HCT116 (cell line): ENCODE measurements at regions of chr5 and their contacts with region 1.

Region 1: GRCh38 chr5:6632917-6633468 is at the starts of genes NSUN2 and SRD5A1:
- DNase-seq: peak; percentile 82
- ATAC-seq: peak; percentile 90
- H3K4me3 ChIP-seq: peak within 1 kb of the TSS; percentile 87 to 96
- H3K27ac ChIP-seq: peak within 1 kb of the TSS; percentile 95
- H3K4me1 ChIP-seq: peaks cover 11 to 18% of the 10 kb centered on the region in 2 experiments; a peak in 3 of 4 replicates
- H3K27me3 ChIP-seq: no peaks in the 10 kb centered on the region
- CTCF ChIP-seq: no peak
- POLR2A ChIP-seq: no peak
- RAD21 ChIP-seq: no peak
- total RNA-seq, gene NSUN2: 101 TPM
- total RNA-seq, gene SRD5A1: 24.7 TPM

Region 2: GRCh38 chr5:6603643-6604042 is 29.4 kb before region 1 on chr5:
- CTCF ChIA-PET with region 1: no interaction called
- POLR2A ChIA-PET with region 1: no interaction called
- RAD21 ChIA-PET with region 1: no interaction called
- intact Hi-C with region 1: no loop called
- DNase-seq: no peak
- ATAC-seq: no peak
- H3K4me3 ChIP-seq: no peak overlapping the region
- H3K27ac ChIP-seq: no peak overlapping the region
- H3K4me1 ChIP-seq: no peaks in the 10 kb centered on the region
- H3K27me3 ChIP-seq: no peaks in the 10 kb centered on the region
- CTCF ChIP-seq: no peak
- POLR2A ChIP-seq: no peak
- RAD21 ChIP-seq: no peak

Region 3: DNA sequence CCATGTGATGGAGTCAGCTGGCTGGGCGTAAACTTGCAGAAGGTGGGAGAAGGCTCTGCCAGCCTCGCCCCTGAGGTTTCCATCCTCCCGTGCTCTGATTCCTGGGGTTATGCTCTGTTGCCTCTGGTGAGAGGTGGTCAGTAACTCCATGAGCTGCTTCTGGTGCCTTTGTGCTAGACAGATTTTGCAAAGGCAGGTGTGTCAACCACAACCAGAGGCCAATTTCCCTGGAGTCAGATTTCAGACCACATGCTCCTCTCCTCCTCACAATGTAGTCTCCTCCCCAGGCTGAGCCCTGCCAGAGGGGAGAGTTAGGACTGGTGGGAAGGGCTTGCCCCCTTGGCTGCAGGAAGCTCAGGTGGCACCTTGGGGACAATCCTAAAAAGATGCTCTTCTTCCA is 41.4 kb after region 1 on chr5:
- CTCF ChIA-PET with region 1: no interaction called
- POLR2A ChIA-PET with region 1: no interaction called
- RAD21 ChIA-PET with region 1: no interaction called
- intact Hi-C with region 1: no loop called
- DNase-seq: no peak
- ATAC-seq: no peak
- H3K4me3 ChIP-seq: no peak overlapping the region
- H3K27ac ChIP-seq: no peak overlapping the region
- H3K4me1 ChIP-seq: peaks cover 0 to 13% of the 10 kb centered on the region in 2 experiments; a peak in 2 of 4 replicates
- H3K27me3 ChIP-seq: no peaks in the 10 kb centered on the region
- CTCF ChIP-seq: no peak
- POLR2A ChIP-seq: no peak
- RAD21 ChIP-seq: no peak

Region 4: GRCh38 chr5:6712577-6713275 is 79.7 kb after region 1 on chr5:
- CTCF ChIA-PET with region 1: no interaction called
- POLR2A ChIA-PET with region 1: interaction called, 4 read pairs
- RAD21 ChIA-PET with region 1: interaction called in 1 of 2 experiments, 4 read pairs
- intact Hi-C with region 1: loop called (anchors 1 kb)
- DNase-seq: peak; percentile 89
- ATAC-seq: peak; percentile 74
- H3K4me3 ChIP-seq: peak overlapping the region; percentile 59 to 75
- H3K27ac ChIP-seq: peak overlapping the region; percentile 98
- H3K4me1 ChIP-seq: peaks cover 15 to 29% of the 10 kb centered on the region in 2 experiments
- H3K27me3 ChIP-seq: no peaks in the 10 kb centered on the region
- CTCF ChIP-seq: no peak
- POLR2A ChIP-seq: peak; percentile 50
- RAD21 ChIP-seq: peak; percentile 2; the same call in 1 of the 2 replicates

Region 5: DNA sequence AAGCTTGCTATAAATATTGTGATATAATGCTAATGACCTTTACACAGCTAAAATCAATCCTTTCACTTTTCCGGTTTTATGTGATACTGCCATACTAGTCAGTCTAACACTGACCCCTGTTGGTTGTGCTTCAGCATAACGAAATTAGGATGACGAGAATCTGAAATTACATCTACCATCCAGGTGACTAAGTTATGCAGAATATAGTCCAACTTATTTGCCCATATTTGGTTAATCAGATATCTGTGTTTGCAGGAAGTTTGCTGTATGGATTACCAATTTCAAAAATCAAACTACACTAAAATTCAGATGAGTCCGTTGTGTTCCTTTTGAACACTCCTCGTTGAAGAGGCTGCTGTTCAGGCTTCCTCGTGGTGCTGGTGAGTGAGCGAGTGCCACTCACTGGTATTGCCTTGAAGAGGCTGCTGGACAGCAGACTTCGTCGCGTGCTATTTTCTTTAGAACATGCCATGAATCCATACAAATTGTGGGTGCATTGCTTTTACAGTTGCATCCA is 112.8 kb after region 1 on chr5:
- CTCF ChIA-PET with region 1: no interaction called
- POLR2A ChIA-PET with region 1: no interaction called
- RAD21 ChIA-PET with region 1: no interaction called
- intact Hi-C with region 1: loop called (anchors 2 kb)
- DNase-seq: peak; percentile 31
- ATAC-seq: peak; percentile 80
- H3K4me3 ChIP-seq: no peak overlapping the region
- H3K27ac ChIP-seq: no peak overlapping the region
- H3K4me1 ChIP-seq: no peaks in the 10 kb centered on the region
- H3K27me3 ChIP-seq: no peaks in the 10 kb centered on the region
- CTCF ChIP-seq: peak; percentile 16 to 86 (median 72); a peak in 5 of 6 replicates
- POLR2A ChIP-seq: no peak
- RAD21 ChIP-seq: peak; percentile 72